A549 (cell line): ENCODE measurements at regions of chr5 and their contacts with region 1.

Region 1: DNA sequence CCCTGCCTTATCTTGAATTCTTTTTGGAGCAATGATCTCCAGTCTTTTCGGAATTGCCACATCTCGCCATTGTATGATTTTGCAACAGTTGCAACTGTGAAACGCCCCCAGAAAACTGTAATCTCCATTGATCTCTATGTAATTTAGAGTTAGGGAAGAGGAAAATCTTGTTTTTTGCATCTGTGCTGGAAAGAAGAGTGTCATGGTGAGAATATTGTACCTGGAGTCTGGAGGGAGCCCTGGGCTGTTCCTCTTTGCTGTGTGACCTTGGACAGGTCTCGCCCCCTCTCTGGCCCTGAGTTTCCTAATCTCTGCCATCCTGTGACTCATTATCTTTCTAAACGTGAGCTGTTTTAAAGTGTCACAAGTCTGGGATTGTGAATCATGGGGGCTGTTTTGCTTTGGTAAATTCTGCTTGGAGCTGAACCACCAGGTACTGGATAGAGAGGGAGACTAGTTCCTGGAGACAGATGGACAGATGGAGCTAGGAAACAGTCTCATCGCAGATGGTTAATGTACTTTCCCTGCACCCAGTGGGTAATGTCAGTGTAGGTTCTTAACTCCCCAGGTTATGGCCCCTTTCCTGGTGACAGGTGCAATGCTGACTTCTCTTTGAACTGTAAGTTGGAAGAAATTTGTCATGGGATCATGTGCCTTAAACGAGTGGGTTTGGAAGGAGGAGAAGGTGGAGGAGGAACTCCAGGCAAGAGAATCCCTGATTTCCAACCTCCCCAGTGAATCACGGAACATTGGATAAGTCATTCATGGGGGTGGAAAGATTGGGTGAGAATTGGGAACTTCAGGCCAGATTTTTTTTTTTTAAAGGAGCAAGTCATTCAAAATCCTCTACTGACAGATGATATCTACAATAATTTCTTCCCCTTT is 19.6 kb downstream of the PPARGC1B start:
- DNase-seq: no peak
- ATAC-seq: no peak; a peak in 2 of 6 replicates
- H3K4me3 ChIP-seq: no peak overlapping the region
- H3K27ac ChIP-seq: peak overlapping the region in 1 of 2 experiments; percentile 19; a peak in 1 of 6 replicates
- H3K4me1 ChIP-seq: peaks cover 33% of the 10 kb centered on the region; the same call in 2 of the 3 replicates
- CTCF ChIP-seq: no peak
- EP300 ChIP-seq: no peak
- POLR2A ChIP-seq: no peak
- RAD21 ChIP-seq: no peak

Region 2: GRCh38 chr5:149731639-149732323 is 17.9 kb before region 1 on chr5:
- CTCF ChIA-PET with region 1: interaction called, 13 read pairs
- POLR2A ChIA-PET with region 1: no interaction called
- DNase-seq: peak; percentile 74 to 81
- ATAC-seq: peak; percentile 45 to 72
- H3K4me3 ChIP-seq: peak overlapping the region; percentile 92
- H3K27ac ChIP-seq: peak overlapping the region; percentile 85 to 91; a peak in 5 of 6 replicates
- H3K4me1 ChIP-seq: 0 out of 3 replicates have a peak, but pooled peaks cover 8% of the 10 kb centered on the region
- CTCF ChIP-seq: no peak
- EP300 ChIP-seq: no peak
- POLR2A ChIP-seq: no peak
- RAD21 ChIP-seq: no peak